ENCODE measurements at regions of chr2 and their contacts with region 1.

Region 1: DNA sequence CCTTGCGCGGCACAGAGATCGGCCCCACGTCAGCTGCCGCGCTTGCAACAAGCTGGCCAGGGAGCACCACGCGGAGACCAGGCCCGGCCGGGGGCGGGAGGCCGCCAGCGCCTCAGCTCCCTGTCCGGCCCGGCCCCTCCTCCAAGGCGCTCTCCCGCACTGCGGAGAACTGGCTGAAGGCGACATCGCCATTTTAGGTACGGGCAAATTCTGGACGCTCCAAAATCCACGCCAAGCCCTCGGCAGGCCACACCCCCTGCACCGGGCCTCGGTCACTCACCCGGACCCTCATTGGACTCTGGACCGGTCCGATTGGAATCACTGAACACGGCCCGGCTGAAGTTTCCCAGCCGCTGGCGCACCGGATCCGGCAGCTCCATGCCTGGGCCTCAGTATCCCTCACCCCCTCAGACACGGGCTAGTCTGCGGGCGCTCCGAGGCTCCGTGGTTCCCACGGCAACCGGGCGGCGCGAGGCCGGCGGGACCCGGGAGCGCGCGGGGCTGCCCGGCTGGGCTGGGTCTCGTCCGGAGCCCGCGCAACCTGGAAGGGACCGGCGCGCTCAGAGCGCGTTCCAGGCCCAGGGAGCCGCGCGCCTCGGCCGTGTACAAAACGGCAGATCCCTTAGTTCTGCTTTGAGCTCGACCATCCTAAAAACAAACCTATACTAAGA is at the start of gene TMEM17:
- DNase-seq: peak; percentile 29
- H3K4me3 Mint-ChIP-seq: peak within 1 kb of the TSS; percentile 72
- H3K27ac Mint-ChIP-seq: no peak within 1 kb of the TSS
- H3K4me1 Mint-ChIP-seq: peaks cover 7% of the 10 kb centered on the region
- H3K27me3 Mint-ChIP-seq: peaks cover 24% of the 10 kb centered on the region
- total RNA-seq, gene TMEM17: 0.21 TPM in 1 of 2 experiments, not detected in the other

Region 2: GRCh38 chr2:63050334-63051041 is 544.6 kb after region 1 on chr2 and contains the start of gene OTX1:
- CTCF ChIA-PET with region 1: no interaction called
- intact Hi-C with region 1: loop called (anchors 5 kb)
- DNase-seq: peak; percentile 55
- H3K4me3 Mint-ChIP-seq: peak within 1 kb of the TSS; percentile 80
- H3K27ac Mint-ChIP-seq: no peak within 1 kb of the TSS
- H3K4me1 Mint-ChIP-seq: peaks cover 61% of the 10 kb centered on the region
- H3K27me3 Mint-ChIP-seq: peaks cover 79% of the 10 kb centered on the region
- total RNA-seq, gene OTX1: not detected

Measured in activated naive CD4-positive, alpha-beta T cell treated with anti-CD3 and anti-CD28 coated beads for 36 hours (primary cell).